GM13977 (cell line): ENCODE measurements at regions of chr4 and their contacts with region 1.

Region 1: GRCh38 chr4:2771264-2771663 is 15.1 kb upstream of the TNIP2 start:
- DNase-seq: no peak
- CTCF ChIP-seq: no peak

Region 2: DNA sequence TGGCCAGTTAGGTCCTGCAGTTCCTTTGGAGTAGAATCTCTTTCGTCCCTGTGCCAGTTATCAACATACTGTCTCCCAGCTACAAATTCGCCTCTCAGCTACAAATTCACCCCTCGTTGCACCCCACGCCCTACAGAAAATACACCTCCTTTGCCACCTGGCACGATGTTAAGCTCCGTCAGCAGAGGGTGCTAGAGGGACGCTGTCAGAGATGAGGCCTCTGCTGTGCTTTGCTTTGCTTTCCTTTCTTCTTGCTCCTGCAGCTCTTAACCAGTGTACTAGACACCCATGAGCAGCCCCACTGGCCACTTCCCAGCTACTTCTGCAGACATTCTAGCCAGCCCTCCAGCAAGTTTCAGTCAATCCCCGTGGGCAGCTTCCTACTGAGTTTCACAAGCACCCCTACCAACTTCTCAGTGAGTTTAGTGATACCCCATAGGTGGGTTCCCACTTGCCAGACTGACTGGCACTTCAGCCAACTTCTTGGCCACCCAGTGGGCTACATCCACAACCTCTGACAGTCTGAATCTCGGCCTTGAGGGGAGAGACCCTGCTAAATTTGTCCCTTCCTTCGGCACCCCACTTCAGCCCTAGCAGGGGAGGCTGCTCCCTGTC is 551.1 kb before region 1 on chr4:
- in situ Hi-C with region 1: no loop called
- DNase-seq: peak; percentile 60
- CTCF ChIP-seq: peak; percentile 91

Region 3: DNA sequence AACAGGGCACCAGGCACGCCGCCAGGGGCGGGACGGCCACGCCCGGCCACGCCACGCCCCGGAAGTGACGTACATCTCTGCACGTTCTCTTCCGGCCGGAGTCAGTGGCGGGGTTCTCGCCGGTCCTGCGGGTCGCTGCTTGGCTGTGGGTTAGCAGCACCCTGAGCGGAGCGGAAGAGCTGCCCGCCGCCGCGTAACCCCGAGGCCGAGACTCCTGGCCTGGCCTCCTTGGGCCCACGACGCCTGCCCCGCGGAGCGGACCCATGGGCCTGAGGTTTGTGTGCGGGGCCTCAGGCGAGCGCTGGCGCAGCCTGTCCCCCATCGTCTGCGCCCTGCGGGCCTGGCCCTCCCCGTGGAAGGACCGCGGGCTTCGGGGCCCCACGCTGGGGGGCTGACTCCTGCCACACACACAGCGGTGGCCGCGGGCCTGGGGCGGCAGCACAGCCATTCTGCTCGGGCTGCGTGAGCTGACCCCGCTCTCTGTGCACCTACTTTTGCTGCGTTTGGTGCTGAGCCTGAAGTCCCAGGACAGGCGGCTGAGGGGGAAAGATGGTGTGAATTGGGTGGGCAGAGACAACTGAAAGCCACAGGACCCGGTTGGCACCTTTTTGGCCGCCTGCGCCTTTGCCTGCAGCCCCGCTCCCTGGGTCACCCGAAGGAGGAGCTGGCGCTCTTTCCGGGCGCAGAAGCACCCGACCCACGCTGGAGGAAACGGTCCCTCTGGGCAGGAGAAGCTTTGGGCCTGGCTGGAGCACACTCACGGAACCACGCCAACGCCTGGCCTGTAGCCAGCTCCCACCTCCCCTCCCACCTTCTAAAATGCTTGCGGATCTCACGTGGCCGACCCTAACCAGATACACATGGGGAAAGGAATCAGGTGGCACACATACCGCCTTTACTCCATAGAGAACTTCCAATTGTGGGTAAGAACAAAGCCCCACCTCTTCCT is 163.8 kb after region 1 on chr4:
- in situ Hi-C with region 1: loop called (anchors 10 kb)
- DNase-seq: peak; percentile 98
- CTCF ChIP-seq: no peak